WTC11 (cell line): ENCODE measurements at regions of chr12 and their contacts with region 1.

Region 1: GRCh38 chr12:108664338-108665258 is 30.9 kb upstream of the SELPLG start:
- DNase-seq: peak; percentile 82
- ATAC-seq: peak; percentile 96
- H3K4me3 Mint-ChIP-seq: no peak overlapping the region
- H3K27ac Mint-ChIP-seq: peak overlapping the region; percentile 55; the same call in 1 of the 2 replicates
- H3K4me1 Mint-ChIP-seq: peaks cover 32% of the 10 kb centered on the region
- H3K27me3 Mint-ChIP-seq: no peaks in the 10 kb centered on the region
- CTCF ChIP-seq: peak; percentile 76

Region 2: DNA sequence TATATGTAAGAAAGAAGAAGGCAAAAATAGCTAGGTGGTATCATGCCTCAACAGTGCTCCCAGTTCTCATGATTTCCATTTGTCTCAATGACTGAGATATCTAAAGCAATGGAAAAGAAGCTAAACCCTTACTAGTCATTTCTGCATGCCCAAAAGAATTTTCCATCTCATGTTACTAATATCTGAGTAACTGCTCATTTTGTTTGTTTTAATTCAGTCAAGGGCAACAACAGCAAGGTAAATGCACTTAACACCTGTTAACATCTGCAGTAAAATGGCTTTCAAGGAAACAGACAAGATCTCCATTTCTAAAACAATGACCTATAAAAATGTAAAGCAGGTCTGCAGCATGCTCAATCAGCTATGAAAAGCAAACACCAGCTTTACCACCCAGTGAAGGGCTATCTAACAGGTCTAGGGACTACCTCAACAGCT is 11.5 kb before region 1 on chr12:
- CTCF ChIA-PET with region 1: interaction called, 12 read pairs
- POLR2A ChIA-PET with region 1: no interaction called
- DNase-seq: no peak
- ATAC-seq: peak; percentile 57
- H3K4me3 Mint-ChIP-seq: no peak overlapping the region
- H3K27ac Mint-ChIP-seq: peak overlapping the region; percentile 69
- H3K4me1 Mint-ChIP-seq: peaks cover 22% of the 10 kb centered on the region
- H3K27me3 Mint-ChIP-seq: peaks cover 5% of the 10 kb centered on the region; the same call in 1 of the 2 replicates
- CTCF ChIP-seq: no peak

Region 3: GRCh38 chr12:108691175-108691997 is 26.8 kb after region 1 on chr12:
- CTCF ChIA-PET with region 1: interaction called, 19 read pairs
- POLR2A ChIA-PET with region 1: interaction called, 3 read pairs
- DNase-seq: peak; percentile 81
- ATAC-seq: peak; percentile 97
- H3K4me3 Mint-ChIP-seq: no peak overlapping the region
- H3K27ac Mint-ChIP-seq: peak overlapping the region; percentile 93
- H3K4me1 Mint-ChIP-seq: peaks cover 43% of the 10 kb centered on the region
- H3K27me3 Mint-ChIP-seq: no peaks in the 10 kb centered on the region
- CTCF ChIP-seq: no peak

Region 4: DNA sequence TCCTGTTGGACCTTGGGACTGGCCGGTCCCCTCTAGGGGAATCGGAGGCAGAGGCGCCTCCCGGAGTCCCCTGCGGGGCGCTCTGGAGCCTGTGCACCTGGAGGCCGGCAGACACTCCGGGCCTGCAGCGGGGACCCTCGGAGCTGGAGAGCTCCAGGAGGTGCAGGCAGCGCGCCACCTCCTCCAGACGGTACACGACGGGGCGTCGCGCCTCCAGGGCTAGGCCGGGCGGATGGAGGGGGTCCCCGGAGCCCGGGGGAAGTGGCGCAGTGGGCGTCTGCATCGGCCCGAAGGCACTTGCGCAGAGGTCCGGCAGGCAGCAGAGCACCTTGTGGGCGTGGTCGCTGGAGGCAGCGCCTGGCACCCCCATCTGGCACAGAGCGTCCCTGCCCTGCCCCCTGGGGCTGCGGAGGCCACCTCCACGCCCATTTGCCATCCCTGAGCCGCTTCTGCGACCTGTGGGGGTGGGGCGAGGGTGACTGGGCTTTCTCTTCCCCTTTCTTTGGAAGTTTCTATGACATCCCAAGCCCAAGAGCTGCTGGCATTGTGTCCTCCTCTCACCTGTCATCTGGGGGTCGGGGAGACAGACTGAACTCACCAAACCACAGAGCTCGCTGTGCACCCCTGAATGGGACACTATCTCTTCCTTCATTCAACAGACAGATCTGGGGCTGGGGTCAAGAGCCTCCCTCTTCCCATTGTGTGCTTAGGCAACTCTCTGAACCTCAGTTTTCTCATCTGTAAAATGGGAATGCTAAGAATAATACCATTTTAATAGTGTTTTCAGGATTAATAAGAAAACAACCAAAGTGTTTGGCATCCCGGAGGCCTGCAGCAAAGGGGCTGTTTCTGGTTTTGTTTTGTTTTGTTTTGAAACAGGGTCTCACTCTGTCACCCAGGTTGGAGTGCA is 104.2 kb after region 1 on chr12:
- CTCF ChIA-PET with region 1: interaction called, 10 read pairs
- POLR2A ChIA-PET with region 1: no interaction called
- DNase-seq: peak; percentile 65
- ATAC-seq: peak; percentile 72
- H3K4me3 Mint-ChIP-seq: peak overlapping the region; percentile 63
- H3K27ac Mint-ChIP-seq: no peak overlapping the region
- H3K4me1 Mint-ChIP-seq: peaks cover 12% of the 10 kb centered on the region; the same call in 1 of the 2 replicates
- H3K27me3 Mint-ChIP-seq: no peaks in the 10 kb centered on the region
- CTCF ChIP-seq: no peak

Region 5: GRCh38 chr12:108803428-108804105 is 139.0 kb after region 1 on chr12:
- CTCF ChIA-PET with region 1: interaction called, 98 read pairs
- POLR2A ChIA-PET with region 1: interaction called, 6 read pairs
- DNase-seq: peak; percentile 64
- ATAC-seq: peak; percentile 9; the same call in 1 of the 2 replicates
- H3K4me3 Mint-ChIP-seq: peak overlapping the region; percentile 56
- H3K27ac Mint-ChIP-seq: peak overlapping the region; percentile 97
- H3K4me1 Mint-ChIP-seq: peaks cover 23% of the 10 kb centered on the region
- H3K27me3 Mint-ChIP-seq: no peaks in the 10 kb centered on the region
- CTCF ChIP-seq: peak; percentile 93